Tibial artery (tissue), 4 donors: ENCODE measurements at regions of chr17 and their contacts with region 1.

Region 1: GRCh38 chr17:55295411-55296170 is 30.8 kb downstream of the HLF start:
- DNase-seq: peak in 1 of 2 donors; percentile 58
- H3K4me3 ChIP-seq: no peak overlapping the region
- H3K27ac ChIP-seq: peak overlapping the region; percentile 43 to 53
- H3K4me1 ChIP-seq: peaks cover 0 to 17% (median 7%) of the 10 kb centered on the region in 4 donors
- H3K27me3 ChIP-seq: no peaks in the 10 kb centered on the region
- CTCF ChIP-seq: peak; percentile 89

Region 2: DNA sequence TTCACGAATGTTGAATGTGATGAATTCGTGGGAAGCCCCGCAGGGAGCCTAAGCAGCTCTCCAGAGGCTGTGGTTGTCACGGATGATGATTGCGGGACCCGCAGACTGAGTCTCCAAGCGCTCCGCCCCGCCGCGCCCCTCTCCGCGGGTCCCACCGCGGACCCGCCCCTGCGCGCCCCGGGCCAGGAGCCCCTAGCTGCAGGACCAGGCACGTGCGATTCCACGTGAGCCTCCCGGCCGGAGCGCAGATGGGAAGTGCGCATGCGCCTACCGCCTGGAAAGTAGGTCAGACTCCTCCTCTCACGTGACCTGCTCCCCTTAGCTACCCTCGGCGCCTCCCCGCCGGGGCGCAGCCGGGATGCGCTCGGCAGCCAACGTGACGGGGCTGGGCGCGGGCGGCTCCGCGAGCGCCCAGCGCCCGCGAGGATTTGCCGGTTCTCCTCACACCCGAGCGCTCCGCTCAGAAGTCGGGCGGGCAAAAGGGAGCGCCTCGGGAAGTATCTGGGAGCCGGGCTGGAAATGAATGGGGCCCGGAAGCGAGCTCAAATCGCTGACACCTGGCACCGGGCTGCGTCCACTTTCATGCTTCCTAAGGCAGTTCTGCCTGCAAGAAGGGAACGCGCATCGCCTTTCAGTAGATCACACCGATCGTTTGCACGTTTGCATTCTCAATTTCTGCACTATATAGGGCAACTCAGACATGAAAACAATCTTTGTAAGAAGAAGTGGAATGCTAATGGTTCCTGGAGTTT is 57.2 kb before region 1 on chr17:
- intact Hi-C with region 1: loop called (anchors 10 kb)
- DNase-seq: peak; percentile 91 to 96
- H3K4me3 ChIP-seq: peak overlapping the region; percentile 57 to 65
- H3K27ac ChIP-seq: peak overlapping the region; percentile 73 to 76
- H3K4me1 ChIP-seq: peaks cover 0 to 21% (median 13%) of the 10 kb centered on the region in 4 donors
- H3K27me3 ChIP-seq: peaks cover 0 to under 1% of the 10 kb centered on the region in 2 donors
- CTCF ChIP-seq: no peak